ENCODE measurements at regions of chr6 and their contacts with region 1.

Region 1: DNA sequence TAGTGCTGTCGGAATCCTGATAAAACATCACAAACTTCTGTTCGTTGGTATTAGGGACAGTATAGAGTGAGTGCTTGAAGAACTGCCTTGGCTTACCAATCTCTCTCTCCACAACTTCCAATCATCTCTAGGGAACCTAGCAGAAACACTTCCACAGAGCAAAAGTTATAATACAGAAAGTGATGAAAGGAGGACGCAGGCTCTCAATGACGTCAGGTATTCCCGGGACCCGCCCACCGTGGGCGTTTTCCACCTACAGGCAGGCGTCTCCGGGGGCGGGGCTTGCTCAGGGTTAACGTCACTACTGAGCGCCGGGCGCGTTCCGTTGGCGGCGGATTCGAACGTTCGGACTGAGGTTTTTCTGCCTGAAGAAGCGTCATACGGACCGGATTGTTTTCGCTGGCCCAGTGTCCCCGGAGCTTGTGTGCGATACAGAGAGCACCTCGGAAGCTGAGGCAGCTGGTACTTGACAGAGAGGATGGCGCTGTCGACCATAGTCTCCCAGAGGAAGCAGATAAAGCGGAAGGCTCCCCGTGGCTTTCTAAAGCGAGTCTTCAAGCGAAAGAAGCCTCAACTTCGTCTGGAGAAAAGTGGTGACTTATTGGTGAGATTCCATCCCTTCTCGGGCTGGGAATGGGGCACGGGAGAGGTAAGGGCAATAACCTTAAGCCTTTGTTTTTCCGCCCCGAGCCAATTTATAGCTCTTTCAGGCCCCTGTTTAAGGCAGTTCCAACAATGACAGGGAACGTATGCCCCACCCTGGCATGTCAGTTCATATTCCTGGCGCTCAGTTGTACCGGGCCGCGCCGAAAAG is at the start of gene CENPW:
- DNase-seq: peak; percentile 77 to 95 (median 90)
- ATAC-seq: peak; percentile 98
- H3K4me3 ChIP-seq: peak within 1 kb of the TSS; percentile 63 to 71
- H3K4me3 Mint-ChIP-seq: no peak within 1 kb of the TSS
- H3K27ac ChIP-seq: peak within 1 kb of the TSS in 1 of 2 experiments; percentile 28
- H3K27ac Mint-ChIP-seq: peak within 1 kb of the TSS; percentile 15
- H3K4me1 ChIP-seq: peaks cover 9% of the 10 kb centered on the region
- H3K4me1 Mint-ChIP-seq: peaks cover 11% of the 10 kb centered on the region
- H3K27me3 ChIP-seq: no peaks in the 10 kb centered on the region
- H3K27me3 Mint-ChIP-seq: no peaks in the 10 kb centered on the region
- CTCF ChIP-seq: no peak
- total RNA-seq, gene CENPW: 2.6 to 4.2 TPM

Region 2: GRCh38 chr6:125301435-125302391 is 1038.3 kb before region 1 on chr6 and contains the start of gene HDDC2:
- CTCF ChIA-PET with region 1: no interaction called
- POLR2A ChIA-PET with region 1: no interaction called
- intact Hi-C with region 1: loop called in 1 of 2 experiments (anchors 10 kb)
- DNase-seq: peak in 8 of 9 experiments; percentile 27 to 67 (median 44)
- ATAC-seq: peak; percentile 43
- H3K4me3 ChIP-seq: peak within 1 kb of the TSS; percentile 65 to 70
- H3K4me3 Mint-ChIP-seq: peak within 1 kb of the TSS; percentile 82
- H3K27ac ChIP-seq: peak within 1 kb of the TSS; percentile 58 to 83
- H3K27ac Mint-ChIP-seq: peak within 1 kb of the TSS; percentile 88
- H3K4me1 ChIP-seq: peaks cover 39% of the 10 kb centered on the region
- H3K4me1 Mint-ChIP-seq: peaks cover 57% of the 10 kb centered on the region
- H3K27me3 ChIP-seq: no peaks in the 10 kb centered on the region
- H3K27me3 Mint-ChIP-seq: peaks cover 4% of the 10 kb centered on the region
- CTCF ChIP-seq: no peak
- total RNA-seq, gene HDDC2: 16.2 to 24.9 TPM

Region 3: DNA sequence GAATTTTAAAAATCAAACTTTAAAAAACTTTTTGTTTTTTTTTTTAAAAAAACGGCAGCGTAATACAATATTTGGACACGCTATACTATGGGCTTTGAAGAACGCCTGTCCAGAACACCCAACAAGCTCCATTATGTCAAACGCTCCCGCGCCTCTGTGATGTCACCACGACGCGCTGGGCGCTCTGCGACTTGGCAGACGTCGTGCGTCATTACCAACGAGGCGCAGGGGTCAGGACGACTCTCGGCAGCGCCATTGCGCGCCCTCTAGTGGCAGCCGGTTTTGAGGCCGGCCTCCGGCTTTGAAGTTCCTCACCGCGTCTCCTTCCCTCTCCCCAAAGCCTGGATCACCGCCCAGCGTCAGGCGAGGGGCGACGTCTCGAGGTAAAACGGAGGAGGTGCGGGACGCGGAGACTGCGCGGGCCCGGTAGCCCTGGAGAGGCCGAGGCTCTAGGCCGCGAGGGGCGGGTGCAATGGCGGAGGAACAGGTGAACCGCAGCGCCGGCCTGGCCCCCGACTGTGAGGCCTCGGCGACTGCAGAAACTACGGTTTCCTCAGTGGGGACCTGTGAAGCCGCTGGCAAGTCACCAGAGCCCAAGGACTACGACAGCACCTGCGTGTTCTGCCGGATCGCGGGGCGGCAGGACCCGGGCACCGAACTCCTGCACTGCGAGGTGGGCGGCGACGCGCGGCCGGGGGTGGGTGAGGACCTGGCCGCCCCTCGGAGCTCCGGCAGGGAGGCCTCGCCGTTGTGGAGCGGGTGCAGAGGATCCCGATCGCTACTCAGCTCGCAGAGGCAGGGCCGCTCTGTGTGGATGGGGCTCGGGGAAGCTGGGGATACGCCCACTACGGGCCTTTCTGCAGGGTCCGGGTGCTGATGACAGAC is 383.3 kb before region 1 on chr6 and contains the start of gene HINT3:
- CTCF ChIA-PET with region 1: no interaction called
- POLR2A ChIA-PET with region 1: interaction called, 3 read pairs
- intact Hi-C with region 1: loop called in 1 of 2 experiments (anchors 10 kb)
- DNase-seq: peak; percentile 95 to 99 (median 98)
- ATAC-seq: peak; percentile 88
- H3K4me3 ChIP-seq: peak within 1 kb of the TSS; percentile 79 to 93
- H3K4me3 Mint-ChIP-seq: no peak within 1 kb of the TSS
- H3K27ac ChIP-seq: peak within 1 kb of the TSS; percentile 97 to 98
- H3K27ac Mint-ChIP-seq: no peak within 1 kb of the TSS
- H3K4me1 ChIP-seq: peaks cover 26% of the 10 kb centered on the region
- H3K4me1 Mint-ChIP-seq: peaks cover 9% of the 10 kb centered on the region
- H3K27me3 ChIP-seq: no peaks in the 10 kb centered on the region
- H3K27me3 Mint-ChIP-seq: peaks cover 6% of the 10 kb centered on the region
- CTCF ChIP-seq: peak; percentile 96
- total RNA-seq, gene HINT3: 14.2 to 15.4 TPM

Region 4: GRCh38 chr6:125995972-125996580 is 343.9 kb before region 1 on chr6:
- CTCF ChIA-PET with region 1: no interaction called
- POLR2A ChIA-PET with region 1: no interaction called
- intact Hi-C with region 1: loop called (anchors 10 kb)
- DNase-seq: peak; percentile 22 to 84 (median 69)
- ATAC-seq: peak; percentile 100
- H3K4me3 ChIP-seq: peak overlapping the region in 1 of 2 experiments; percentile 16
- H3K4me3 Mint-ChIP-seq: peak overlapping the region; percentile 76
- H3K27ac ChIP-seq: no peak overlapping the region
- H3K27ac Mint-ChIP-seq: no peak overlapping the region
- H3K4me1 ChIP-seq: no peaks in the 10 kb centered on the region
- H3K4me1 Mint-ChIP-seq: peaks cover 27% of the 10 kb centered on the region
- H3K27me3 ChIP-seq: no peaks in the 10 kb centered on the region
- H3K27me3 Mint-ChIP-seq: no peaks in the 10 kb centered on the region
- CTCF ChIP-seq: peak; percentile 99

Region 5: DNA sequence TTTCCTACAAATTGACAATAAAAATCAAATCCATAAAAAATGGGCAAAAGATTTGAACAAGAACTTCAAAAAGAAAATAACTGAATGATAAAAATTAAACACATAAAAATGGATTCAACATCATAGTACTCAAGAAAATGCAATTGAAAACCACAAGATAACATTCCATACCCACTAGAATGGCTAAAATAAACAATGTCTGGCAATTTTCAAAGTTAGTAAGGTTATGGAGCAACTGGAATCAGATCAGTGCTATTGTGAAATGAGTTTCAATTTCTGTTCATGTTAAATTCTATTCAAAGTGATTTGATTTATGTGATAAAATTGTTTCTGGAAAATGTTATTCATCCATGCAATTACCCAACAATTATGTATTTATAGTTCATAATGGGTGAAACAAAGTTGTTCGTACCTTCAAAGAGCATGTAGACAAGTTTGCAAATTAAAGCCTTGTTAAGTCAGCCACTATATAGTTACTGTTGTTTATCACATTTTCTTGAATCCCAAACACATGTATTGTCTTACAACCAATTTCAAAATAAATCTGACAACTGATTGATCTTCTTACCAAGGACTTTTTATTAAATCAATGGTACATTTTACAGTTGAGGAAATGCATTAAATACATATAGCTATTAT is 151.6 kb before region 1 on chr6:
- CTCF ChIA-PET with region 1: no interaction called
- POLR2A ChIA-PET with region 1: no interaction called
- intact Hi-C with region 1: no loop called
- DNase-seq: no peak
- ATAC-seq: no peak
- H3K4me3 ChIP-seq: no peak overlapping the region
- H3K4me3 Mint-ChIP-seq: no peak overlapping the region
- H3K27ac ChIP-seq: no peak overlapping the region
- H3K27ac Mint-ChIP-seq: no peak overlapping the region
- H3K4me1 ChIP-seq: no peaks in the 10 kb centered on the region
- H3K4me1 Mint-ChIP-seq: no peaks in the 10 kb centered on the region
- H3K27me3 ChIP-seq: no peaks in the 10 kb centered on the region
- H3K27me3 Mint-ChIP-seq: no peaks in the 10 kb centered on the region
- CTCF ChIP-seq: no peak

Region 6: GRCh38 chr6:126721581-126722145 is 381.7 kb after region 1 on chr6:
- CTCF ChIA-PET with region 1: no interaction called
- POLR2A ChIA-PET with region 1: no interaction called
- intact Hi-C with region 1: no loop called
- DNase-seq: no peak
- ATAC-seq: no peak
- H3K4me3 ChIP-seq: no peak overlapping the region
- H3K4me3 Mint-ChIP-seq: no peak overlapping the region
- H3K27ac ChIP-seq: no peak overlapping the region
- H3K27ac Mint-ChIP-seq: no peak overlapping the region
- H3K4me1 ChIP-seq: no peaks in the 10 kb centered on the region
- H3K4me1 Mint-ChIP-seq: no peaks in the 10 kb centered on the region
- H3K27me3 ChIP-seq: no peaks in the 10 kb centered on the region
- H3K27me3 Mint-ChIP-seq: no peaks in the 10 kb centered on the region
- CTCF ChIP-seq: no peak

Region 7: GRCh38 chr6:127249621-127250020 is 909.6 kb after region 1 on chr6:
- CTCF ChIA-PET with region 1: no interaction called
- POLR2A ChIA-PET with region 1: no interaction called
- intact Hi-C with region 1: loop called in 1 of 2 experiments (anchors 5 kb)
- DNase-seq: no peak
- ATAC-seq: no peak
- H3K4me3 ChIP-seq: no peak overlapping the region
- H3K4me3 Mint-ChIP-seq: no peak overlapping the region
- H3K27ac ChIP-seq: no peak overlapping the region
- H3K27ac Mint-ChIP-seq: no peak overlapping the region
- H3K4me1 ChIP-seq: no peaks in the 10 kb centered on the region
- H3K4me1 Mint-ChIP-seq: no peaks in the 10 kb centered on the region
- H3K27me3 ChIP-seq: no peaks in the 10 kb centered on the region
- H3K27me3 Mint-ChIP-seq: peaks cover 20% of the 10 kb centered on the region
- CTCF ChIP-seq: no peak

Region 8: GRCh38 chr6:127516666-127517273 is 1176.8 kb after region 1 on chr6:
- CTCF ChIA-PET with region 1: no interaction called
- POLR2A ChIA-PET with region 1: no interaction called
- intact Hi-C with region 1: loop called in 1 of 2 experiments (anchors 5 kb)
- DNase-seq: peak in 6 of 9 experiments; percentile 23 to 69 (median 40)
- ATAC-seq: peak; percentile 28
- H3K4me3 ChIP-seq: peak overlapping the region; percentile 64 to 65
- H3K4me3 Mint-ChIP-seq: peak overlapping the region; percentile 86
- H3K27ac ChIP-seq: no peak overlapping the region
- H3K27ac Mint-ChIP-seq: peak overlapping the region; percentile 24
- H3K4me1 ChIP-seq: peaks cover 30% of the 10 kb centered on the region
- H3K4me1 Mint-ChIP-seq: peaks cover 30% of the 10 kb centered on the region
- H3K27me3 ChIP-seq: peaks cover 12 to 27% of the 10 kb centered on the region in 2 experiments
- H3K27me3 Mint-ChIP-seq: peaks cover 36% of the 10 kb centered on the region
- CTCF ChIP-seq: peak; percentile 74

Measured in CD8-positive, alpha-beta T cell (primary cell).